Activated CD4-positive, alpha-beta memory T cell treated with anti-CD3 and anti-CD28 coated beads, Interleukin-2, amount 10 ng/mL, durations not matched to agents 7 days and 5 days (primary cell): ENCODE measurements at regions of chr2 and their contacts with region 1.

Region 1: DNA sequence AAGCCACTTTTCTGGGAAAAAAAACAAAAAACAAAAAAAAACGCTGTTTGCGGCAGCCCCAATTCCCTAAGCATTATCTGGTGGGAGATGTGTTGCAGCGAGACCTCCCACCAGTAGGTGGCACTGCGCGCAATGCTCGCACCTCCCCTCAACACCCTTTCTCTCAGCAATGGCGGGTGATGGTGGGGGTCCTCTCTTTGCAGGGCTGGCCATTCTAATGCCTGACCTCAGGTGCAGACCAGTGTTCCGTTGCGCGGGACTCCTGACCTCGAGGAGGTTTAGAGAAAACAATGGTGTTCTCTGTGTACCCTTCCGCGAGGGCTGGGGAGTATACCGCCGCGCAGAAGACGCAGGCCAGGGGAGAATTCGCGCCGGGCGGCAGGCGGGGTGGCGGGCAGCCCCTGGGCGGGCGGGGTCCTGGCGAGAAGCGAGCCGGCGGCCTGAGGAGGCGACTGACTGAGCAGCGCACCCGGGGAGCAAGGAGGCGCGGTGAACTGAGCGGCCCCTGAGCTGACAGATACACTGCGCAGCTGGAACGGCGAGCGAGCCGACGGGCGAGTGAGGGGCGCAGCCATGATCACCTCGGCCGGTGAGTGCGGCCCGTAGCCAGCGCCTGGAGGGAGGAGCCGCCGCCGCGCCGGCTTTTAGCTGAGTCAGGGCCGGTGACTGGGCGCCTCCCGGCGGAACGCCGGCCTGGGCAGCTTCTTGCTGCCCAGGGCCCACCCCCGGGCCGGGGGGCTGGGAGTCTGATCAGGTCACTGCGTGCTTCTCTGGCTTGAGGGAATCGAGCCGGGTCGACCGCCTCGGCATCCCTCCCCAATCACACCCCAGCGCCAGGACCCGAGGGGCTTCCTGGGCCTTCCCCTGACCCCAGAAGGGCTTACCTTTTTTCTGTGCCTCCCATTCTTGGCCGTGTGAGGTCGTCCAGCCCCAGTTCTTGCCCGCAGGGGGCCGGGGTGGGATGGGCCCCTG is at the start of gene PSMD1:
- DNase-seq: peak; percentile 93
- H3K4me3 Mint-ChIP-seq: peak within 1 kb of the TSS; percentile 96
- H3K27ac Mint-ChIP-seq: peak within 1 kb of the TSS; percentile 98
- H3K4me1 Mint-ChIP-seq: peaks cover 64% of the 10 kb centered on the region
- H3K27me3 Mint-ChIP-seq: peaks cover 4% of the 10 kb centered on the region
- total RNA-seq, gene PSMD1: 79.3 to 80.0 TPM

Region 2: DNA sequence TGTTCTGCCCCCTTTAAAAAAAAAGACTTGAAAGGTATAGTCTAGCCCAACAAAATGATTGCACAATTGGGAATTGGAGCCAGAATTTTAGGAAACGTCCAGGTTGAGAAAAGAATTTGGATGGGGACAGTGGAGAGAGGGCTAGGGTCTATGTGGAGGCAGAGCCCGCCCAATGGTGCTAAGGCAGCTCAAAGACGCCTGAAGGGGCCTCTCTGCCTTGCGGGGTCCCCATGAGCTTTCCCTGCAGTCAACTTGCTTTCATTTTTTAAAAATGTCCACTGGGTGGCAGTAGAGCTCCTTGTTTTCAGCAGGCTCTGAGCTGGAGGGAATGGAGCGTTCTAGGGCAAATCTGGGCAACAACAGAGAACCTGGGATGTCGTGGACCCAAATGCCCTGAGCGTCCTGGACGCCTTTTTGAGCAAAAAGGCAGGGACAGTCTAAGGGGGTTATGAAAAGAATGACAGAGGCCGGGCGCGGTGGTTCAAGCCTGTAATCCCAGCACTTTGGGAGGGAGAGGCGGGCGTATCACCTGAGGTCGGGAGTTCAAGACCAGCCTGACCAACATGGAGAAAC is 232.2 kb before region 1 on chr2:
- CTCF ChIA-PET with region 1: interaction called, 11 read pairs
- POLR2A ChIA-PET with region 1: interaction called, 4 read pairs
- DNase-seq: peak; percentile 55
- H3K4me3 Mint-ChIP-seq: peak overlapping the region; percentile 21
- H3K27ac Mint-ChIP-seq: no peak overlapping the region
- H3K4me1 Mint-ChIP-seq: peaks cover 20% of the 10 kb centered on the region
- H3K27me3 Mint-ChIP-seq: peaks cover 33% of the 10 kb centered on the region

Region 3: GRCh38 chr2:230902180-230902899 is 154.4 kb before region 1 on chr2:
- CTCF ChIA-PET with region 1: interaction called, 13 read pairs
- POLR2A ChIA-PET with region 1: no interaction called
- DNase-seq: peak; percentile 58
- H3K4me3 Mint-ChIP-seq: no peak overlapping the region
- H3K27ac Mint-ChIP-seq: no peak overlapping the region
- H3K4me1 Mint-ChIP-seq: peaks cover 41% of the 10 kb centered on the region
- H3K27me3 Mint-ChIP-seq: peaks cover 22% of the 10 kb centered on the region

Region 4: DNA sequence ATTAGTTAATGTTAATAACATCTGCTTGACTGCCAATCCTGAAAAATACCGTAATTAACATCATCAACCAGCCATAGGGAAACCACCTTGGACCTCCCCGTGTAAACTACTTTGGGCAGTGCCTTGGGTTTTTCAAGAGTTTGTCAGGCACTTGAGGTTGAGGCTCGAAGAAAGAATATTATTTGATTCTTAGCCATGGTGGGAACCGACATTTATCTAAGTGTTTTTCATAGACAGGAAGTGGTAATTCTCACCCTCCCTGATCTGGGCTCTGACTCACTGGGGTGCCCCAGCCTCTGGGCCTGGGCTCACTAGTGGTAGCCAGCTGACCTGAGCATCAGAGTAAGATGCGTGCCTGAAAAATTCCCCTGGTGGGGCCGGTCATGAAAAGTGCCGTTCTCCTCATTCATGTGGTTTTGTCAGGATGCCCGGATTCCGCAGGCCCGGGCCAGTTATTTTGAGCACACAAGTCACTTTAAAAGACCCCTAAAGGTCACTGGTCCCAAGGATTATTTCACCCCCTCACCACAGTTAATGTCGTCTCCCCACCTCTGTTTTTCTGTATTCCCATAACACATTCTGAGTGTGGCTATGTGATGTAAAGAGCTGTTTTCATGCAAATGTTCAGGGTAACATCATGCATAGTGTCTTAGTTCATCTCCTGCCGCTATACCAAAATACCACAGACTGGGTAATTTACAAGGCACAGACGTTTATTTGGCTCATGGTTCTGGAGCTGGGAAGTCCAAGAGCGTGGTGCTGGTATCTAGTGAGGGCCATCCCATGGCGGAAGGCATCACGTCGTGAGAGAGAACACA is 82.4 kb before region 1 on chr2:
- CTCF ChIA-PET with region 1: no interaction called
- POLR2A ChIA-PET with region 1: no interaction called
- DNase-seq: peak; percentile 77
- H3K4me3 Mint-ChIP-seq: peak overlapping the region; percentile 9
- H3K27ac Mint-ChIP-seq: peak overlapping the region; percentile 78
- H3K4me1 Mint-ChIP-seq: peaks cover 60% of the 10 kb centered on the region
- H3K27me3 Mint-ChIP-seq: peaks cover 35% of the 10 kb centered on the region

Region 5: GRCh38 chr2:231037731-231038482 is 18.8 kb before region 1 on chr2:
- CTCF ChIA-PET with region 1: interaction called, 17 read pairs
- POLR2A ChIA-PET with region 1: interaction called, 4 read pairs
- DNase-seq: no peak
- H3K4me3 Mint-ChIP-seq: no peak overlapping the region
- H3K27ac Mint-ChIP-seq: no peak overlapping the region
- H3K4me1 Mint-ChIP-seq: peaks cover 6% of the 10 kb centered on the region
- H3K27me3 Mint-ChIP-seq: peaks cover 76% of the 10 kb centered on the region

Region 6: GRCh38 chr2:231068525-231069222 is 11.9 kb after region 1 on chr2:
- CTCF ChIA-PET with region 1: interaction called, 11 read pairs
- POLR2A ChIA-PET with region 1: interaction called, 4 read pairs
- DNase-seq: peak; percentile 52
- H3K4me3 Mint-ChIP-seq: no peak overlapping the region
- H3K27ac Mint-ChIP-seq: peak overlapping the region; percentile 77
- H3K4me1 Mint-ChIP-seq: peaks cover 25% of the 10 kb centered on the region
- H3K27me3 Mint-ChIP-seq: no peaks in the 10 kb centered on the region

Region 7: GRCh38 chr2:231084565-231084964 is 27.8 kb after region 1 on chr2:
- CTCF ChIA-PET with region 1: interaction called, 11 read pairs
- POLR2A ChIA-PET with region 1: no interaction called
- DNase-seq: no peak
- H3K4me3 Mint-ChIP-seq: no peak overlapping the region
- H3K27ac Mint-ChIP-seq: no peak overlapping the region
- H3K4me1 Mint-ChIP-seq: peaks cover 2% of the 10 kb centered on the region
- H3K27me3 Mint-ChIP-seq: no peaks in the 10 kb centered on the region